ENCODE measurements at regions of chr7 and their contacts with region 1.

Region 1: GRCh38 chr7:100456558-100456957 is 7.5 kb downstream of the SPACDR start:
- DNase-seq: no peak
- H3K4me3 ChIP-seq: no peak overlapping the region
- H3K27ac ChIP-seq: no peak overlapping the region
- H3K4me1 ChIP-seq: peaks cover 10% of the 10 kb centered on the region
- H3K27me3 ChIP-seq: no peaks in the 10 kb centered on the region
- CTCF ChIP-seq: no peak
- POLR2A ChIP-seq: no peak

Region 2: DNA sequence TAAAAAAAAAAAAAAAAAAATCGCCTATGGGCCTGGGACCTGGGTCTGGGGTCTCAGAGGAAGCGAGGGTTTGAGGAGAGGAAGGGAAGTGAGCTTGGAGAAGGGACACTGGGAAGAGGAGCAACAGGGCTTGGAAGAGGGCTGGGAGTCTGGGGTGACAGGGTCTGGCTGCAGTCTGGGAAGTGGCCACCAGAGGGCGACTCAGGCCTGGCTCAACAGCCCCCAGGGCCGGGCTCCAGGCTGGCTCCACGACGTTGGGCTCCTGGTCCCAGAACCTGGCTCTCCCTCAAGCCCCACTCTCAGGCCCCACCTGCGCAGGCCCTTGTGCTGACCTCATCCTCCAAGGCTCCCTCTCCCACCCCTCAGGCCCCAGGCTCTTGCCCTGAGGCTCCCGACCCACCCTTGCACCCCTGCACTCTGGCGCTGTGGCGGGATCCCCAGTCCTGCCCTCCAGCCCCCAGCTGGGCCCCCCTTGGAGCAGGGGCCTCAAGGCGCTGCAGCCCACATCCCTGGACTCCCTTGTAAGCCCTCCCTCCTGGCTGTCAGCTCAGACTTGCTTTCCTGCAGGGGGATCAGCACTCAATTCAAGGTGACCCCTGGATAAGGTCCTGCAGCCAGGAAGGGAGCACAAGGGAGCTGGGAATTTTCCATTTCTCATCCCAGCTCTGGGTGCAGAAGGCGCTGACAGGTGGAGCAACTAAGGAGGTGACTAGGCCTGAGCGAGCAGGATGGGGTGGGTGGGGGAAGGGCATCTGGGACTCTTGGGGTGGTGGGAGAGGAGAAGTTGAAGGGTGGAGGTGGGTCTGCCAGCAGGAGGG is 12.9 kb after region 1 on chr7:
- CTCF ChIA-PET with region 1: interaction called, 38 read pairs
- POLR2A ChIA-PET with region 1: no interaction called
- dilution Hi-C with region 1: no loop called
- intact Hi-C with region 1: no loop called
- DNase-seq: peak; percentile 66
- H3K4me3 ChIP-seq: no peak overlapping the region
- H3K27ac ChIP-seq: no peak overlapping the region
- H3K4me1 ChIP-seq: peaks cover 8% of the 10 kb centered on the region
- H3K27me3 ChIP-seq: no peaks in the 10 kb centered on the region
- CTCF ChIP-seq: peak; percentile 89 to 100
- POLR2A ChIP-seq: peak; percentile 52